Activated CD8-positive, alpha-beta memory T cell treated with anti-CD3 and anti-CD28 coated beads, Interleukin-2, amount 10 ng/mL, durations not matched to agents 7 days and 5 days (primary cell): ENCODE measurements at regions of chr19 and their contacts with region 1.

Region 1: GRCh38 chr19:18152444-18152816 is 533 bp upstream of the PIK3R2 start:
- DNase-seq: peak; percentile 100
- ATAC-seq: peak; percentile 80
- H3K4me3 Mint-ChIP-seq: peak overlapping the region; percentile 84
- H3K27ac Mint-ChIP-seq: peak overlapping the region; percentile 93
- H3K4me1 Mint-ChIP-seq: peaks cover 35% of the 10 kb centered on the region
- H3K27me3 Mint-ChIP-seq: no peaks in the 10 kb centered on the region

Region 2: DNA sequence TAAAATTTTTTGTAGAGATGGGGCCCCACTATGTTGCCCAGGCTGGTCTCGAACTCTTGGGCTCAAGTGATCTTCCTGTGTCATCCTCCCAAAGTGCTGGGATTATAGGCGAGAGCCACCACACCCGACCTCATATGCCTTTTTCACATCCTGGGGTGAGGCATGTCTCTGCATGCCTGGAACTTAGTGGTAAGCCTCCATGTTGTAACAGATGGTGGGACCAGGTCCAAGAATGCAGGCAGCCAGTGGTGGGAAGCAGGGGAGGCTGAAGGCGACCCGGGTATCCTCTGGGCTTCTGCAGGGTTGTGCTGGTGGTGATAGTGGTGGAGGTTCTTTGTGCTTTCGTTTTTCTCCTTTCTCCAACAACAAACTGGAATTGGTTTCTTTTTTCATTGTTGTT is 249.7 kb before region 1 on chr19:
- CTCF ChIA-PET with region 1: no interaction called
- DNase-seq: no peak
- ATAC-seq: no peak
- H3K4me3 Mint-ChIP-seq: no peak overlapping the region
- H3K27ac Mint-ChIP-seq: no peak overlapping the region
- H3K4me1 Mint-ChIP-seq: peaks cover 4% of the 10 kb centered on the region
- H3K27me3 Mint-ChIP-seq: peaks cover 35% of the 10 kb centered on the region

Region 3: GRCh38 chr19:18141031-18141430 is 11.4 kb before region 1 on chr19:
- CTCF ChIA-PET with region 1: interaction called, 12 read pairs
- DNase-seq: no peak
- ATAC-seq: no peak
- H3K4me3 Mint-ChIP-seq: no peak overlapping the region
- H3K27ac Mint-ChIP-seq: no peak overlapping the region
- H3K4me1 Mint-ChIP-seq: no peaks in the 10 kb centered on the region
- H3K27me3 Mint-ChIP-seq: no peaks in the 10 kb centered on the region

Region 4: DNA sequence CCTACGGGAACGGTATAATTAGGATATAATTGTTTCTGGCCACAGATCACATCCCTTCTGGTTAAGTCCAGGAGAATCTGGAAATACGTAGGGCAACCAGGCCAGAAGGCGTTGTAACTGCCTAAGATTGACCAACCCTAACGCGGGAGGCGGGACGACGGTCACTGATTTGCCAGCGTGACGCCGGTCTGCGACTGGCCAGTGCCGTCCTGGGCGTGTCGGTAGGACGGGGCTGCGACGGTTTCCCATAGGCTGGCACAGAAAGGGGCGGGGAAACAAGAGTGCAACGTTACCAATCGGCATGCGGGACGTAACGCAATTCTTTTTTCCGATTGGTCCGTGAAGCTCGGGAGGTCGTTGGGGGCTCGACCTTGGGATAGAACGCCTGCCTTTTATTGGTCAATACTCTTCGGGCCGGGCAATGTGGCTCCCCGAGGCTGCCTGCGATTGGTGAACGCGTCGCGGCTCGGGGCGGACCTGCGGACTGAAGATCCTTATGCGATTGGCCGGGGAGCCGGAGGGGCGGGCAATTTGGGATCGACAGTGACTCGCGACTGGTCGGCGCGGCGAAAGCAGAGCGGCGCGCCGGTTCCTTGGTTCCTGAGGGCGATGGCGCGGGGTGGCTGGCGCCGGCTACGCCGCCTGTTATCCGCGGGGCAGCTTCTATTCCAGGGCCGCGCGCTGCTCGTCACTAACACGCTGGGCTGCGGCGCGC is 40.4 kb after region 1 on chr19 and contains the start of gene MPV17L2:
- CTCF ChIA-PET with region 1: no interaction called
- DNase-seq: peak; percentile 100
- ATAC-seq: peak; percentile 94
- H3K4me3 Mint-ChIP-seq: peak within 1 kb of the TSS; percentile 82
- H3K27ac Mint-ChIP-seq: peak within 1 kb of the TSS; percentile 93
- H3K4me1 Mint-ChIP-seq: peaks cover 28% of the 10 kb centered on the region
- H3K27me3 Mint-ChIP-seq: peaks cover 3% of the 10 kb centered on the region
- total RNA-seq, gene MPV17L2: 8.2 to 12.9 TPM